HAP-1 (cell line): ENCODE measurements at regions of chr12 and their contacts with region 1.

Region 1: DNA sequence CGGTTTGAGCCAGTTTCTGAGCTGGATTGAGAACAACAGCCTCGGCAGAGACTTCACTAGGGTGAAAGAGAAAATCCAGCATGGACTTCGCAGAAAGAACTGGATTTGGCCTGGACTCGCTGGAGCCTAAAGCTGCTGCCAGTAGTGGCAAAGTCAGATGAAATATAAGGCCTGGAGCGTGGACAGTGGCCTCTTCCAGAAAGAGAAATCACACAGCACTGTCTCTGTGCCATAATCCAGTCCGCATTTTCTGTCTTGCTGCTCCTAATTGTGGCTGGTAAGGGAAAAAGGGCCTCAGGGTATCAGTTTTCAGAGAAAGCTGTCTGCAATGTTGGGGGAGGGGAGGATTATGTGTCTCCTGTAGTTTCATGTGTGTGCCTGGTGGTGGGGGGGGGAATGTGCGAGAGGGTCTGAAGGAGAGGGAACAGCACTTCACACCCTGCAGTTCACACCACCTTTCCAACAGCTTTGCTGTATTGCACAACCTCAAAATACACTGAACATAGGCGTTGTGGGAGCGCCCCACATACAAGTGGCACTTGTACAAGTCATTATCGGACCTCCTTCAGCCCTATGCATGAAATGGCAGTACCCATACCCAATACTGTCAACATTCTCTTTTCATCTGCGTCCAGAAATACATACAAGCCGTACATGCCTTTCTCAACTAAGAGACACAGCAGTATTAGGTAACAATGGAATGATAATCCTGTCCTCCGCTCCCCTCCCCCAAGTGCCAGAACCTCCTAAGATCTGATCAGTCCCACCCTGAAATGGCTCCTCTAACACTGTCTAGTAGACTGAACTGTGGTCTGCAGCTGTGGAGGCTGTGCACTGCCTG is 107.5 kb upstream of the ATF7IP start:
- DNase-seq: peak; percentile 86 to 95
- H3K4me3 ChIP-seq: no peak overlapping the region
- H3K4me1 ChIP-seq: peaks cover 31% of the 10 kb centered on the region
- H3K27me3 ChIP-seq: no peaks in the 10 kb centered on the region

Region 2: GRCh38 chr12:14207905-14208551 is 49.9 kb before region 1 on chr12:
- in situ Hi-C with region 1: no loop called
- DNase-seq: no peak
- H3K4me3 ChIP-seq: no peak overlapping the region
- H3K4me1 ChIP-seq: no peaks in the 10 kb centered on the region
- H3K27me3 ChIP-seq: no peaks in the 10 kb centered on the region

Region 3: DNA sequence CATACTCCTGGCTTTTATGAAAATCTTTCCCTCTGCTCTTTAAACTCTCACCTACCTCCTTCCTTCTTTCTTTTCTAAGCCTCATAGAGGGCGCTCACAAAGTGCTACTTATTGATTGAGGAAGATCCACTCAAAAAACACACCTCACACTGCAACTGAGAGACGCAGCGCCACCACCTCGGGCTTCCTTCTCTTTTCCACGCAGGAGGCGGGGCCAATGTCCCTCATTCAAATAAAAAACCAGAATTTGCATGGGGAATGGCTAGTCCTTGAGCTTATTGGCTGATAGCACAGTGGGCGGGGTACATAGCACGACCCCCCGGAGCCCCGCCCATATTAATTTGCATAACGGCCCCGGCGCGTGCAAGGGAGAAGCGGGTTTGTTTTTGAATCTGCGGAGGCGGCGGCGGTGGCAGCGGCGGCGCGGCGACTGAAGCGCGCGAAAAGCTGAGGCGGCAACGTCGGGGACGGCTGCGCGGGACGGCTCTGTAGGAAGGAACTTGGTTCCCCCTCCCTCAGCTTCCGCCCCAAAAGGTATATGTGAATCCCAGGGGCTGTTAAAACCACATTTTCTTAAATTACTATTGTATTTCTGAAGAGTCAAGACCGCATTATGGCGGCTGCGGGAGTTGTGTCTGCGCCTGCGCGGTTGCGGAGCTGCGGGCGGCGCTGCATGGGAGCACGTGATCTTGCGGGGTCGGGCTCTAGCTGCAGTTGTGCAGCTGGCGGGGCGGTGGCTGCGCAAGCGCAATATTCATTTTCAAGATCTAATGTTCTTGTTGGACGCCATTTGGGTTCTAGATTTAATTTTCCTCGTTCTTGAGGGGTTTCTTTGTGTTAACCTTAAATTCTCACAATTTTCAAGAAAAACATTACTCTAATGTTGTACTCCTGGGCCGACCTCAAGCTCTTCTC is 107.6 kb after region 1 on chr12 and contains the start of gene ATF7IP:
- in situ Hi-C with region 1: loop called (anchors 10 kb)
- DNase-seq: peak; percentile 95 to 96
- H3K4me3 ChIP-seq: peak within 1 kb of the TSS; percentile 54
- H3K4me1 ChIP-seq: no peaks in the 10 kb centered on the region; the same call in none of the 2 replicates
- H3K27me3 ChIP-seq: no peaks in the 10 kb centered on the region

Region 4: GRCh38 chr12:14394317-14395073 is 136.5 kb after region 1 on chr12:
- in situ Hi-C with region 1: loop called (anchors 10 kb)
- DNase-seq: peak; percentile 56 to 89
- H3K4me3 ChIP-seq: no peak overlapping the region
- H3K4me1 ChIP-seq: peaks cover 36% of the 10 kb centered on the region
- H3K27me3 ChIP-seq: no peaks in the 10 kb centered on the region